T-cell (primary cell): ENCODE measurements at regions of chr2 and their contacts with region 1.

Region 1: DNA sequence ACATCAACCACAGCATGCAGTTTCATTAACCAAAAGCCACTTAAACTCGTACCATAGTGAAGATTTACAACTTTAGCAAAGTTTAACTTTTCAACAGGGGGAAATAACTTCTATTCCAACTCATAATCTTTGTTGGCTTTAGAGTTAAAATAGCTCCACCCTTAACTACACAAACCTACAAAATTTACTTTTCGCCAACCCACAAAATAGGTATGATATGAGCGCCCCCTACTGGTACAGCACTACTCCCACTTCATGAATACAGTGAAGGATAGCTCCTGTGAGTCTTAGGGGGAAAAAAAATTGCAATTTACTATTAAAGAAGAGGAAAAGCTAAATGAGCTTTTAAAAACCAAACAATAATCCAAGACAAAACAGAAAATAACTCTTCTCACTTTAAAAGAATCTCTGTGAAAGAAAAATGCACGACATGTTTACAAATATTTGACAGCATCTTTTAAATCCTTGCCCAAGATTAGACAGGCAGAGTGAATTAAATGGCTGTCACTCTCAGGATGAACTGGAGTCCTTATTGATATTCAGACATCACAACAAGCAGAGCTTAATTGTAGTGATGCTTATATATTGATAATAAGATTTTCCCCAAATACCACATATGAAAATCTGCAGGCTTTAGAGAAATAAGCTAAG is 32.2 kb downstream of the TMEFF2 start:
- DNase-seq: peak; percentile 0 to 81 (median 45)
- ATAC-seq: peak in 3 of 4 experiments; percentile 33 to 61 (median 44)
- H3K4me3 ChIP-seq: no peak overlapping the region
- H3K4me3 Mint-ChIP-seq: no peak overlapping the region
- H3K27ac ChIP-seq: no peak overlapping the region
- H3K27ac Mint-ChIP-seq: no peak overlapping the region
- H3K4me1 ChIP-seq: no peaks in the 10 kb centered on the region
- H3K4me1 Mint-ChIP-seq: peaks cover 10 to 12% (median 11%) of the 10 kb centered on the region in 3 donors
- H3K27me3 ChIP-seq: peaks cover 0 to 2% of the 10 kb centered on the region in 2 experiments
- H3K27me3 Mint-ChIP-seq: peaks cover 12 to 16% of the 10 kb centered on the region in 2 donors

Region 2: GRCh38 chr2:191165176-191165643 is 997.3 kb before region 1 on chr2:
- CTCF ChIA-PET with region 1: interaction called, 4 to 15 read pairs
- POLR2A ChIA-PET with region 1: no interaction called
- DNase-seq: peak in 9 of 35 experiments; percentile 5 to 72 (median 26)
- ATAC-seq: peak in 3 of 4 experiments; percentile 71 to 79 (median 71)
- H3K4me3 ChIP-seq: no peak overlapping the region
- H3K4me3 Mint-ChIP-seq: no peak overlapping the region
- H3K27ac ChIP-seq: no peak overlapping the region
- H3K27ac Mint-ChIP-seq: no peak overlapping the region
- H3K4me1 ChIP-seq: peaks cover 0 to 2% of the 10 kb centered on the region in 2 experiments
- H3K4me1 Mint-ChIP-seq: peaks cover 6 to 14% (median 9%) of the 10 kb centered on the region in 3 donors
- H3K27me3 ChIP-seq: no peaks in the 10 kb centered on the region
- H3K27me3 Mint-ChIP-seq: no peaks in the 10 kb centered on the region

Region 3: DNA sequence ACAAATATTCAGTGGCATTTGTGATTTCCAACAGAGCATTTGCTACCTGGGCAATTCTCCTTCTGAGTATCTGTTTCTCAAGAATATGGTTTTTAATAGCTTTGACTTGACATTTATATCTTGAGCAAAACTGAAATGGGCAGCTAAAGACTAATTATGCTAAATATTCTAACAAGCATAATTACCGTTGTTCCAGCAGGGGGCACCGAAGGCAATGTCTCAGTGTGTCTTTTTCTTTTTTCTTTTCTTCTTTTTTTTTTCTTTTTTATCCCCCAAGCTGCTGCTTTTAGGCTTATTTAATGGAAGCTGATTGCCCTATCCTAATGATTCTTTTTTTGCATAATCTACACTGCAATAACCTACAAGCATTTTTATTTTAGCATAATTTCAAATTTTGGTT is 623.4 kb before region 1 on chr2:
- CTCF ChIA-PET with region 1: interaction called, 9 to 20 read pairs
- POLR2A ChIA-PET with region 1: no interaction called
- DNase-seq: peak in 17 of 35 experiments; percentile 3 to 42 (median 13)
- ATAC-seq: no peak
- H3K4me3 ChIP-seq: no peak overlapping the region
- H3K4me3 Mint-ChIP-seq: no peak overlapping the region
- H3K27ac ChIP-seq: no peak overlapping the region
- H3K27ac Mint-ChIP-seq: no peak overlapping the region
- H3K4me1 ChIP-seq: no peaks in the 10 kb centered on the region
- H3K4me1 Mint-ChIP-seq: peaks cover 0 to 1% (median 0%) of the 10 kb centered on the region in 3 donors
- H3K27me3 ChIP-seq: peaks cover 0 to 3% of the 10 kb centered on the region in 2 experiments
- H3K27me3 Mint-ChIP-seq: peaks cover 0 to 7% of the 10 kb centered on the region in 2 donors

Region 4: DNA sequence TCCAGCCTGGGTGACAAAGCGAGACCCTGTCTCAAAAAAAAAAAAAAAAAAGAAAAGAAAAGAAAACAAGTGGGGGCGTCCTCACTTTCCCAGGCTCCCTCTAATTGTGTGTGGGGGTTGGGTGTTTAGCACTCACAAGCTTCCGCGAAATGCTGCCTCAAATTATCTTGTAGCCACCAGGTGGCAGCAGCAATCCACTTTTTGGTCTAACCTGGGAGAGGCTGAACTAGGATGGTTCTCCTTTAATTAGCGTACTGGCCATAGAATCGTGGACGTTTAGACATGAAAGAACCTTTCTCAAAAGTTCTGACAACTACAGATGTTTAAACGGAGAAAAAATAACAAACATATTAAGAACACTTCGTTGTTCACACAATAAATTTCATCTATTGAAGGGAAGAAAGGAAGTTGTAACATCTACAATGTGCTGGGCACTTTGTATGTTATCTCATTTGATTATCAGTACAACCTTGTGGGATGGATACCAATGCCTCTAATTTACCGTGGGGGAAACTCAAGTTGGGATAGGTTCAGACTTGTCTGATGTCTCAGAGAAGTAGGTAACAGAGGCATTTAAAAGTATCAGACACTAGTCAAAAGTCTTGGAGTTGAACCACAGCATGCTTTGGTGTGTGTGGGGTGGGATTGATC is 607.3 kb before region 1 on chr2:
- CTCF ChIA-PET with region 1: interaction called, 74 to 111 read pairs
- POLR2A ChIA-PET with region 1: interaction called in 1 of 2 experiments, 3 read pairs
- DNase-seq: peak; percentile 42 to 87 (median 70)
- ATAC-seq: peak; percentile 63 to 88 (median 74)
- H3K4me3 ChIP-seq: no peak overlapping the region
- H3K4me3 Mint-ChIP-seq: no peak overlapping the region
- H3K27ac ChIP-seq: no peak overlapping the region
- H3K27ac Mint-ChIP-seq: no peak overlapping the region
- H3K4me1 ChIP-seq: no peaks in the 10 kb centered on the region
- H3K4me1 Mint-ChIP-seq: peaks cover 2 to 5% (median 3%) of the 10 kb centered on the region in 3 donors
- H3K27me3 ChIP-seq: peaks cover 0 to 7% of the 10 kb centered on the region in 2 experiments
- H3K27me3 Mint-ChIP-seq: peaks cover 13 to 16% of the 10 kb centered on the region in 2 donors

Region 5: GRCh38 chr2:191566344-191566743 is 596.2 kb before region 1 on chr2:
- CTCF ChIA-PET with region 1: interaction called, 13 to 34 read pairs
- POLR2A ChIA-PET with region 1: no interaction called
- DNase-seq: peak; percentile 7 to 83 (median 55)
- ATAC-seq: peak; percentile 57 to 67 (median 65)
- H3K4me3 ChIP-seq: no peak overlapping the region
- H3K4me3 Mint-ChIP-seq: no peak overlapping the region
- H3K27ac ChIP-seq: no peak overlapping the region
- H3K27ac Mint-ChIP-seq: no peak overlapping the region
- H3K4me1 ChIP-seq: peaks cover 10 to 16% of the 10 kb centered on the region in 2 experiments
- H3K4me1 Mint-ChIP-seq: peaks cover 16 to 28% (median 17%) of the 10 kb centered on the region in 3 donors
- H3K27me3 ChIP-seq: peaks cover 0 to 13% of the 10 kb centered on the region in 2 experiments
- H3K27me3 Mint-ChIP-seq: peaks cover 20 to 25% of the 10 kb centered on the region in 2 donors

Region 6: GRCh38 chr2:191811807-191812602 is 350.5 kb before region 1 on chr2:
- CTCF ChIA-PET with region 1: interaction called, 10 to 54 read pairs
- POLR2A ChIA-PET with region 1: no interaction called
- DNase-seq: peak in 17 of 35 experiments; percentile 0 to 46 (median 12)
- ATAC-seq: peak in 1 of 4 experiments; percentile 31
- H3K4me3 ChIP-seq: no peak overlapping the region
- H3K4me3 Mint-ChIP-seq: no peak overlapping the region
- H3K27ac ChIP-seq: no peak overlapping the region
- H3K27ac Mint-ChIP-seq: no peak overlapping the region
- H3K4me1 ChIP-seq: no peaks in the 10 kb centered on the region
- H3K4me1 Mint-ChIP-seq: no peaks in the 10 kb centered on the region
- H3K27me3 ChIP-seq: peaks cover 0 to 3% of the 10 kb centered on the region in 2 experiments
- H3K27me3 Mint-ChIP-seq: peaks cover 4 to 7% of the 10 kb centered on the region in 2 donors